CD8-positive, alpha-beta T cell (primary cell): ENCODE measurements at regions of chr1 and their contacts with region 1.

Region 1: DNA sequence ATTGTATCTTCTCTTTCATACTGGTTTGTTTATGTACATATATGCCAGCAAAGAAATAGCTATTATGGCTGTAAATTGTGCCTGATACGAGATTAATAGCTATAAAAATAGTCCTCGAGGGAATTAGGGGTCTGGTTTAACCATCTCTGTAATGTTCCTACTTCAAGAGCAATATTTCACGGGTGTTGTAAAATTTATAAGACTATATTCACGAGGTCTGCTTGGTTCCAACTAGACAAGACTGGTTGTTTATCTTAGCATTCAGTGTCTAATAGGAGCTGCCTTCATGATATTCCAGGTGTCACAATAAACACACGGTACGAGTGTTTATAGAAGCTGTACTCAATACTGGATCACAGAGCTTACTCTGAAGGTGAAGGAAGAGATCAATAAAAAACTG is 389.9 kb downstream of the SIPA1L2 start:
- DNase-seq: no peak
- ATAC-seq: no peak
- H3K4me3 ChIP-seq: no peak overlapping the region
- H3K4me3 Mint-ChIP-seq: no peak overlapping the region
- H3K27ac ChIP-seq: no peak overlapping the region
- H3K27ac Mint-ChIP-seq: no peak overlapping the region
- H3K4me1 ChIP-seq: no peaks in the 10 kb centered on the region
- H3K4me1 Mint-ChIP-seq: no peaks in the 10 kb centered on the region
- H3K27me3 ChIP-seq: no peaks in the 10 kb centered on the region
- H3K27me3 Mint-ChIP-seq: peaks cover 22% of the 10 kb centered on the region
- CTCF ChIP-seq: no peak

Region 2: GRCh38 chr1:232292818-232293217 is 52.8 kb after region 1 on chr1:
- CTCF ChIA-PET with region 1: no interaction called
- POLR2A ChIA-PET with region 1: no interaction called
- intact Hi-C with region 1: loop called in 1 of 2 experiments (anchors 2 kb)
- DNase-seq: no peak
- ATAC-seq: no peak
- H3K4me3 ChIP-seq: no peak overlapping the region
- H3K4me3 Mint-ChIP-seq: no peak overlapping the region
- H3K27ac ChIP-seq: no peak overlapping the region
- H3K27ac Mint-ChIP-seq: no peak overlapping the region
- H3K4me1 ChIP-seq: no peaks in the 10 kb centered on the region
- H3K4me1 Mint-ChIP-seq: no peaks in the 10 kb centered on the region
- H3K27me3 ChIP-seq: no peaks in the 10 kb centered on the region
- H3K27me3 Mint-ChIP-seq: peaks cover 11% of the 10 kb centered on the region
- CTCF ChIP-seq: no peak

Region 3: DNA sequence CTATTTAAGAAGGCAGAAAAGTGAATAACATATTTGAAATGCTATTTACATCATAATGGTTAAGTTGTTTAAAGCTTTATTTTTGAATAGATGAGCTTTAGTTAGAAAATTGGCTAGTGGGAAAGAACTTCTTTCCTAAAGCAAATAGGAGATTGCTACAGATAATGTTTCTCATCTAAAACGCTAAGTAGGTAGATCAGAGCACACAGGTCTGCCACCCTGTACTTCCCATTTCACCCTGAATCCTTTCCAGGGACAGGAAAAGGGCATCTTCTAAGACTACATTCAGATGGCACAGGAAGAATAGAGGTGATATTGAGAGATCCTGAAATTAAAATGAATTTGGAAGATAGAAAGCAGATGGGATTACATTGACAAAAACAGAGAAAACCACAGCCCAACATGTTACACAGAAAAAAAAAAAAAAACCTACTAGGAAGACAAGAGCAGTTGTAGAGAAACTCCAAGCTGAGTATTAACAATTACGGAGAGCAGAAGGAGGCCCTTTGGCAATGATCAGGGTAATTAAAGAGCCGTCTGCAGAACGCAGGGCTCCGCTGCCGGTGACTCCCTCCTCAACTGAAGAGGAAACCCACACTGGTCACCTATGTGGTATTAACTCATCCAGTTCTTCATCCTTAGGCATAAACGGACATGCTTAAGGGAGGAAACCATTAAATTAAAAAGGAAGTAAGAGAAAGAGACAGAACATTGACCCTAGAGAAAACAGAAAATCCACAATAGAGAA is 511.6 kb after region 1 on chr1:
- CTCF ChIA-PET with region 1: no interaction called
- POLR2A ChIA-PET with region 1: no interaction called
- intact Hi-C with region 1: no loop called
- DNase-seq: no peak
- ATAC-seq: no peak
- H3K4me3 ChIP-seq: no peak overlapping the region
- H3K4me3 Mint-ChIP-seq: no peak overlapping the region
- H3K27ac ChIP-seq: no peak overlapping the region
- H3K27ac Mint-ChIP-seq: no peak overlapping the region
- H3K4me1 ChIP-seq: no peaks in the 10 kb centered on the region
- H3K4me1 Mint-ChIP-seq: peaks cover 7% of the 10 kb centered on the region
- H3K27me3 ChIP-seq: no peaks in the 10 kb centered on the region
- H3K27me3 Mint-ChIP-seq: no peaks in the 10 kb centered on the region
- CTCF ChIP-seq: no peak